Mucosa of descending colon (tissue), 3 donors: ENCODE measurements at regions of chr19 and their contacts with region 1.

Region 1: DNA sequence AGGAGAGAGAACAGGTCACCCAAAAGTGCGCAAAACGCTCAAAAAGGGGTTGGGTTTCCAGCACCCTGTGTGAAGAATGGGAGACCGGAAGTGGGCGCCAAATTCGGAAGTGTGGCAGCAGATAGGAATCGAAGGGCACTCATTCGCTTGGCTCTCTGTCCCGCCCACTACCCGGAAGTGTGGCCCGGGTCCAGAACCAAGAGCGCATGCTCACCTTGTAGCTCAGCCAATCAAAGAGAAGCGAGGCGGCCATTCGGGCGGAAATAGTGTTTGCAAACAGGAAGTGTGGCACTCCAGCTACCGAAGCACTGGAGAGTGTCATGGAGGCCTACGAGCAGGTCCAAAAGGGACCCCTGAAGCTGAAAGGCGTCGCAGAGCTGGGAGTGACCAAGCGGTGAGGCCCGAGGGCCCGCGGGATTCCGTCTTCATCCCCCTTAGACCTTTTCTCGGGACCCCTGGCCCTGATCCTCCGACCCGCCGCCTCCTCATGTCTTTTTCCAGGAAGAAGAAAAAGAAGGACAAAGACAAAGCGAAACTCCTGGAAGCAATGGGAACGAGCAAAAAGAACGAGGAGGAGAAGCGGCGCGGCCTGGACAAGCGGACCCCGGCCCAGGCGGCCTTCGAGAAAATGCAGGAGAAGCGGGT is at the start of gene FAM32A:
- DNase-seq: peak; percentile 99
- ATAC-seq: peak; percentile 99
- H3K4me3 ChIP-seq: peak within 1 kb of the TSS; percentile 88
- H3K4me1 ChIP-seq: peaks cover 11% of the 10 kb centered on the region
- CTCF ChIP-seq: peak; percentile 34
- total RNA-seq, gene FAM32A: 77.1 to 88.3 (median 77.8) TPM

Region 2: DNA sequence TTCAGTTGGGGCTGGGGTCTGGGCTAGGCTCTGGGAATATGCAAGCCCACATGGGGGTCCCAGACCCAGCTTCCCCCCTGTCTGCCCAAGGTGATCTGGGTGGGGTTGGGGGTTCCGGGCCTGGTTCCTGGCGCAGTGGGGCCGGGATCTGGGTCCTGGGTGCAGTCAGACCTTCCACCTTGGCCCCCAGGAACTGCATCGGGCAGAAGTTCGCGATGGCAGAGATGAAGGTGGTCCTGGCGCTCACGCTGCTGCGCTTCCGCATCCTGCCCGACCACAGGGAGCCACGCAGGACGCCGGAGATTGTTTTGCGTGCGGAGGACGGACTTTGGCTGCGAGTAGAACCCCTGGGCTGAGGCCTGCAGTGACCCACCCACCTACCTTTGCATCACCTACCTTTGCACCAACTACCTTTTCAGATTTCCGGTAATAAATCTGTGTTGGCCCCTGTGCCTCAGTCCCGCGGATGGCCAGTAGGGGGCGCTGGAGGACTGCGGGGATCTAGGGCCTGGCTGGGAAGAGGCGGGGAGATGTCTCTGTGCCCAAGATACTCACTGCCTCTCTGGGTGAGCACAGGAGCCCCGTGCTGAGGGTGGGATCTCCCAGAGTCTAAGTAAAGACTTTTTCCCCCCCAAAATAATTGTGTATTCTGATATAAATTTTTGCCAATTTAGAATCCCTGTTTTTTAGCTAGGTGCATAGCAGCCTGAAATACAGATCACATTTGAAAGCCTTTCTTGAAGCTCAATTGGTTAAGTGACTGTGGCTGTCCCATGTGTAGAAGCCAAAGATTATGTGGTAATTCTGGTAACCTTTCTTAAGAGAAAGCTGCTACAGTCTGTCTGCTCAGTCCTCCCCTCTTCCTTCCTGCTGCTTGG is 556.0 kb before region 1 on chr19:
- intact Hi-C with region 1: loop called (anchors 5 to 10 kb)
- DNase-seq: peak; percentile 87 to 95 (median 94)
- ATAC-seq: peak; percentile 99
- H3K4me3 ChIP-seq: no peak overlapping the region
- H3K4me1 ChIP-seq: no peaks in the 10 kb centered on the region
- CTCF ChIP-seq: peak; percentile 93

Region 3: GRCh38 chr19:15836595-15837337 is 348.5 kb before region 1 on chr19:
- intact Hi-C with region 1: loop called in 1 of 2 experiments (anchors 5 kb)
- DNase-seq: peak; percentile 95 to 99 (median 98)
- ATAC-seq: peak; percentile 97
- H3K4me3 ChIP-seq: peak overlapping the region; percentile 83
- H3K4me1 ChIP-seq: peaks cover 9% of the 10 kb centered on the region
- CTCF ChIP-seq: no peak

Region 4: GRCh38 chr19:16041299-16041990 is 143.8 kb before region 1 on chr19:
- intact Hi-C with region 1: loop called (anchors 2 to 5 kb)
- DNase-seq: peak; percentile 85 to 91 (median 88)
- ATAC-seq: peak; percentile 98
- H3K4me3 ChIP-seq: no peak overlapping the region
- H3K4me1 ChIP-seq: peaks cover 8% of the 10 kb centered on the region
- CTCF ChIP-seq: peak; percentile 95